ENCODE measurements at regions of chr20 and their contacts with region 1.

Region 1: DNA sequence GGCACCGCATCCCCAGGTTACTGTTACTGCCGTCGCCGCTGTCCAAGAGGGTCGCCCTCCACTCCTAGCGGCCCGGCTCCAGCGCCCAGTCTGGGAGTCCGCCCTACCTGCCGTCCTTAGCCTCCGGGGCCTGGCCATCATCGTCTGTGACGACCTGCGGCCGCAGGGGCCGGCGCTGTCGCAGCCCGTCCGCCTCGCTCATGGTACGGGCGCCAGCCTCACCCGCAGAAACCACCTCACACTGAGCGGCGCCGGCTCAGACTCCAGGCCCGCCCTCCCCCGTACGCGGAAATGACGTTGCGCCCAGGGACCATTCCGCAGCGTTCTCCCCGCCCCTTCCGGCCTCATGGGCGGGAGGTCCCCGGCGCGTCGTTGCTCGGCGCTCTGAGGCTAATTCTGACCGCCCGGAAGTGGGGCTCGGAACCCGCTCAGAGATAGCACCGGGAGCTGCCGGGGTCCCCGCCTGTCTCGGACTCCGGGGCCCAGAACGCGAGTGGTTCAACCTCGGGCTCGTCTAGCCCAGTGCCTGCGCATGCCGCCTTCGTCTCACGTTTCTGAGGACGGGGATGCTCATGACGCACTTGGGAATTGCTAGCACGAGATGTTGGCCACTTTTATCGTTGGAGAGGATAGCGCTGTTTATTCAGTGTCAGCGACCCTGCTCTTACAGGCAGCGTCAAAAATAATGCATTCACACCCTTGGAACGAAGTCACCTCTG is at the start of gene APMAP:
- DNase-seq: peak; percentile 97
- H3K4me3 ChIP-seq: peak within 1 kb of the TSS; percentile 71 to 96 (median 87)
- H3K27ac ChIP-seq: peak within 1 kb of the TSS; percentile 92 to 96 (median 94)
- H3K4me1 ChIP-seq: peaks cover 15 to 42% (median 20%) of the 10 kb centered on the region in 4 donors
- H3K27me3 ChIP-seq: no peaks in the 10 kb centered on the region
- CTCF ChIP-seq: no peak
- EP300 ChIP-seq: no peak
- POLR2A ChIP-seq: peak; percentile 98
- total RNA-seq, gene APMAP: 14.9 to 88.6 (median 50.2) TPM

Region 2: GRCh38 chr20:25032478-25033280 is 40.0 kb after region 1 on chr20:
- in situ Hi-C with region 1: no loop called
- intact Hi-C with region 1: no loop called
- DNase-seq: peak; percentile 52
- H3K4me3 ChIP-seq: no peak overlapping the region
- H3K27ac ChIP-seq: peak overlapping the region; percentile 70 to 79 (median 76)
- H3K4me1 ChIP-seq: peaks cover 35 to 52% (median 46%) of the 10 kb centered on the region in 4 donors
- H3K27me3 ChIP-seq: no peaks in the 10 kb centered on the region
- CTCF ChIP-seq: no peak
- EP300 ChIP-seq: no peak
- POLR2A ChIP-seq: no peak

Region 3: GRCh38 chr20:25057234-25058050 is 64.8 kb after region 1 on chr20:
- in situ Hi-C with region 1: loop called in 2 of 4 experiments (anchors 5 to 10 kb)
- intact Hi-C with region 1: no loop called
- DNase-seq: peak; percentile 85
- H3K4me3 ChIP-seq: peak overlapping the region; percentile 39 to 85 (median 80)
- H3K27ac ChIP-seq: peak overlapping the region; percentile 92 to 98 (median 96)
- H3K4me1 ChIP-seq: peaks cover 23 to 61% (median 48%) of the 10 kb centered on the region in 4 donors
- H3K27me3 ChIP-seq: no peaks in the 10 kb centered on the region
- CTCF ChIP-seq: peak in 4 of 5 experiments; percentile 2 to 48 (median 12)
- EP300 ChIP-seq: no peak
- POLR2A ChIP-seq: peak; percentile 82

Region 4: DNA sequence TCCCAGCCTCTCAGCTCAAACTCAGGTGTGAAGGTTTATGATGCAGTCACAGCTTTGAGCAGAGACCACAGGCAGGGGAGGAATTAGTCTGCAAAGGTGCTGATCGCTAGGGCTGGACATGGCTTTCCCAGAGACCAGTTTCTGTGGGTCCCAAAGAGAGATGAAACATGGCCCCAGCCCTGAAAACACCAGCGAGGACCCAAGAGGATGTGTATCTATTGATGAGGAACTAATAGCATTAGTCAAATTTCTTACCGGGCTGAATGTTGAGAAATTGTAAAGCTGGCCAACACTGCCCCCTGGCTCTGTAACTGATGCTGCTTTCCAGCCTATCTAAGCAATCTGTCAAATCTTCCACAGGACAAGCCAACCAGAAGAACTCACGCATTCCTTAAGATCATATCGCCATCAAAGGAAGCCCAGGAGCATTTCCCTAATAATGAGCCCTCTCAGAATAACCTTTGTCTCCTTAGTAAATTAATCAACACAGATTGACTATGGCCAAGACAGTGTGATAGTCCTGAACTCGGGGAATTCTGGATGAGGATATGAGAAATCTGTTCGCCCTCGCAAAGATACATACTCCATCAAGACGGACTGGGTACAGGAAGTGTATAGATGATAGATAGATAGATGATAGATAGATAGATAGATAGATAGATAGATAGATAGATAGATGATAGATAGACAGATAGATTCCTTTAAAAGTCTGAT is 73.1 kb after region 1 on chr20:
- in situ Hi-C with region 1: loop called (anchors 5 to 10 kb)
- intact Hi-C with region 1: loop called (anchors 2 kb)
- DNase-seq: peak; percentile 72
- H3K4me3 ChIP-seq: no peak overlapping the region
- H3K27ac ChIP-seq: no peak overlapping the region
- H3K4me1 ChIP-seq: peaks cover 0 to 8% (median 3%) of the 10 kb centered on the region in 4 donors
- H3K27me3 ChIP-seq: peaks cover 17% of the 10 kb centered on the region
- CTCF ChIP-seq: peak; percentile 74 to 89 (median 77)
- EP300 ChIP-seq: no peak
- POLR2A ChIP-seq: no peak

Region 5: DNA sequence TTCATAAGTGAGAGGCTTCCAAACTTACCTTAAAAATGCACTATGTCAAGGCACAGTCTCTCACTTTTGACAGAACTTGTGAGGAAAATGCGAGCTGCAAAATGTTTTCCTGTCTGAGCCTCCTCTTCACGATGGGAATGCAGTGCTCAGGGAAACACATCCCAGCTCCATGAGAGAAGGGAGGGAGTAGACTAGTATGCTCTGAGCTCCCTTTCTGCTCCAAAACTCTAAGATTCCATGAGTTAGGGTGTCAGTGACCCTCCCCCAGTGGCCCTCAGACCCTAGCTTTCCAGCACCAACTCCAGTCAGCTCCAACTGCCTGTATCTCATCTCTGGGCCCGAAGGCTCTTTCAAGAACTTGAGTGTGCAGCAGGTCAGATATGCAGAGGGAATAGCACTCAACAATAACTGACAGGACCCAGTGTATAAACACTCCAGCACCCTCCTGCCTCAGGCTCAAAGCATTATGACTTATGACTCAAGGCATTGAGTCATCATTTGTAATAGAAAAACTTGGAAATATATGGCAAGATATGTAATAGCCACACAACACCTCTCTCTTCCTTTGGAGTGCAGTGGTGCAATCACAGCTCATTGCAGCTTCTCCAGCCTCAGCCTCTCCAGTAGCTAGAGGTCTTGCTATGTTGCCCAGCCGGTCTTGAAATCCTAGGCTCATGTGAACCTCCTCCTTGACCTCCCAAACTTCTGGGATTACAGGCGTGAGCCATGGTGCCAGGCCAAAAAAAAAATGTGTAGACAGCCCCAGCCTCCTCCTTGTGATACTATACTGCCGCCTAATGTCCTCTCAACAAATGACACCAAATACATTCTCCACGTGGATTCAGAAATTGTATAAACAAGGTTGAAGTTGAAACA is 186.2 kb after region 1 on chr20:
- in situ Hi-C with region 1: loop called in 2 of 4 experiments (anchors 10 to 25 kb)
- intact Hi-C with region 1: loop called (anchors 5 kb)
- DNase-seq: no peak
- H3K4me3 ChIP-seq: no peak overlapping the region
- H3K27ac ChIP-seq: peak overlapping the region in 2 of 4 donors; percentile 22 to 72
- H3K4me1 ChIP-seq: peaks cover 0 to 9% (median 0%) of the 10 kb centered on the region in 4 donors
- H3K27me3 ChIP-seq: no peaks in the 10 kb centered on the region
- CTCF ChIP-seq: peak; percentile 66 to 80 (median 70)
- EP300 ChIP-seq: no peak
- POLR2A ChIP-seq: no peak

Region 6: DNA sequence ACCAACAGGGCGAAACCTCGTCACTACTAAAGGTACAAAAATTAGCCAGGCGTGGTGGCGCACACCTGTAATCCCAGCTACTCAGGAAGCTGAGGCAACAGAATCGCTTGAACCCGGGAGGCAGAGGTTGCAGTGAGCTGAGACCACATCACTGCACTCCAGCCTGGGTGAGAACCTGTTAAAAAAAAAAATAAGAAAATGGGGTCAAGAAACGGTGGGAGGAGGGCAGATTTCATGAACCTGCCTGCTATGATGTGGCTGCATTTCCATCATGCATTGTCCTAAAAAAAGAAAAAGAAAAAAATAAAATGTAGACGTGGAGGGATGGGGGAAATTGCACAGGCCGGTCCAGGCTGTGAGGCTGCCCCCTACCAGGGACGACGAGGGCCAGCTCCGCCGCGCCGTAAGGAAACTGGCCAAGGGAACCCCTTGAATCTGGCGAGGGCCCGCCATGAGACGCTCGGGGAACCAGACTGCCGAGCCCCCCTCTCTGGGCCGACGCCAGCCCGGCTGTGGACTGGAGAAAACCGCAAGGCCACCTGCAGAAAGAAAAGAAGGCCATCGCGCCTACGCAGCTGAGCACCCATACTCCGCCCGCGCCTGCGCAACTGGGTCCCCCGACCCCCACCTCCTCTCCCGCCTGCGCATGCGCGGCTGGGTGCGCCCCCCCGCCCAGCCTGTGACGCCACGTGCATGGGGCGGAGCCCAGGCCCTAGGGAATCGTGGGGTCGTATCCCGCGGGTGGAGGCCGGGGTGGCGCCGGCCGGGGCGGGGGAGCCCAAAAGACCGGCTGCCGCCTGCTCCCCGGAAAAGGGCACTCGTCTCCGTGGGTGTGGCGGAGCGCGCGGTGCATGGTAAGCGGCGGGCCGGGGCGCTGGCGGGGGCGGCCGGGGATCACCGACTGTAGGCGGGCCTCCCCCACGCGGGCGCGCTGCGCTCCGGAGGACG is 202.6 kb after region 1 on chr20 and contains the start of gene ENTPD6:
- in situ Hi-C with region 1: loop called in 2 of 4 experiments (anchors 10 to 25 kb)
- intact Hi-C with region 1: no loop called
- DNase-seq: peak; percentile 96
- H3K4me3 ChIP-seq: peak within 1 kb of the TSS; percentile 64 to 98 (median 80)
- H3K27ac ChIP-seq: peak within 1 kb of the TSS; percentile 84 to 94 (median 91)
- H3K4me1 ChIP-seq: peaks cover 22 to 44% (median 34%) of the 10 kb centered on the region in 4 donors
- H3K27me3 ChIP-seq: no peaks in the 10 kb centered on the region
- CTCF ChIP-seq: peak in 4 of 5 experiments; percentile 4 to 28 (median 10)
- EP300 ChIP-seq: no peak
- POLR2A ChIP-seq: peak; percentile 76
- total RNA-seq, gene ENTPD6: 163 to 261 (median 224) TPM

Region 7: DNA sequence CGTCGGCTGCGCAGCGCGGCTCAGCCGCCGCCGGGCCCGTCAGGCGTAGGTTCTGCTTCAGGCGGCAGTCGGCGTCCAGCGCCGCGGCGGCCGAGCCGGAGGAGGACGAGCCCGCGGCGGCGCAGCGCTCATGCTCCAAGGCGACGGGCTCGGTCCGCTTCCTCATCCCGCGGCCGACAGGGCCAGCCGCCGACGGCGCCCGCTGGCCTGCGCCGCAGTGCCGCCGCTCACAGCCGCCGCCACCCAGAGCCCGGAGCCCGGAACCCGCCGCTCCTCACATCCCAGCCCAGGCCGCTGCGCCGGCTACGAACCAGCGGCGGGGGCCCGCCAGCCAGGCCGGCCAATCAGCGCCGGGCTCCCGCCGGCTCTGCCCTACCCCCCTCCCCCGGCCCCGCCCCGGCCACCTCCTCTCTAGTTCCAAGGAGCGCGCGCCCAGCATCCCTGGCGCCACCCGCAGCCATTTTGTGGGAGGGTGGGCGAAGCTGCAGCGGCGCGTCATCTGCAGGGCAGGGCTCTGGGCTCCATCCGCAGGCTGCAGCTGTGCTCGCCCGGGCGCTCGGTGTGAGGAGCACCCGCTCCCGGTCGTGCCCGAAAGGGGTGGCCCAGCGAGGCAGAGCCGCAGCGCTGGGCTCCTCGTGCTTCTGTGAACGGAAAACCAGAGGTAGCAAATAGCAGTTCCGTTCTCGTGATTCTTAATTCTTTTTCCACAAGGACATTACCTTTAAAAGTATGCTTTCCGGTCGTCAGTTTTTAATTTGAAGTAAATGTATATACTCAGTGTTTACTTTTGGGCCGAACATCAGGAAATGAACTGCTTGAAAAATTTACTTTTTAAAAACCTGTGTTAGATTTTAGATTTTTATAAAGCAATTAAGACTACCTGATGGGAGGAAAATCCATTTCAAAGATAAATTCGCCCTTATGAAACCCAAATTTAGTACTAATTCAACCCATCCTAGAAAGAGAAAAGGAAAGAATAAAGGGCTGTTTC is 398.2 kb after region 1 on chr20 and contains the start of gene ABHD12:
- in situ Hi-C with region 1: loop called in 1 of 4 experiments (anchors 10 kb)
- intact Hi-C with region 1: no loop called
- DNase-seq: peak; percentile 98
- H3K4me3 ChIP-seq: peak within 1 kb of the TSS; percentile 71 to 94 (median 74)
- H3K27ac ChIP-seq: peak within 1 kb of the TSS; percentile 94 to 98 (median 94)
- H3K4me1 ChIP-seq: peaks cover 3 to 15% (median 11%) of the 10 kb centered on the region in 4 donors
- H3K27me3 ChIP-seq: no peaks in the 10 kb centered on the region
- CTCF ChIP-seq: no peak
- EP300 ChIP-seq: no peak
- POLR2A ChIP-seq: peak; percentile 91
- total RNA-seq, gene ABHD12: 67.3 to 103 (median 73.4) TPM

Region 8: DNA sequence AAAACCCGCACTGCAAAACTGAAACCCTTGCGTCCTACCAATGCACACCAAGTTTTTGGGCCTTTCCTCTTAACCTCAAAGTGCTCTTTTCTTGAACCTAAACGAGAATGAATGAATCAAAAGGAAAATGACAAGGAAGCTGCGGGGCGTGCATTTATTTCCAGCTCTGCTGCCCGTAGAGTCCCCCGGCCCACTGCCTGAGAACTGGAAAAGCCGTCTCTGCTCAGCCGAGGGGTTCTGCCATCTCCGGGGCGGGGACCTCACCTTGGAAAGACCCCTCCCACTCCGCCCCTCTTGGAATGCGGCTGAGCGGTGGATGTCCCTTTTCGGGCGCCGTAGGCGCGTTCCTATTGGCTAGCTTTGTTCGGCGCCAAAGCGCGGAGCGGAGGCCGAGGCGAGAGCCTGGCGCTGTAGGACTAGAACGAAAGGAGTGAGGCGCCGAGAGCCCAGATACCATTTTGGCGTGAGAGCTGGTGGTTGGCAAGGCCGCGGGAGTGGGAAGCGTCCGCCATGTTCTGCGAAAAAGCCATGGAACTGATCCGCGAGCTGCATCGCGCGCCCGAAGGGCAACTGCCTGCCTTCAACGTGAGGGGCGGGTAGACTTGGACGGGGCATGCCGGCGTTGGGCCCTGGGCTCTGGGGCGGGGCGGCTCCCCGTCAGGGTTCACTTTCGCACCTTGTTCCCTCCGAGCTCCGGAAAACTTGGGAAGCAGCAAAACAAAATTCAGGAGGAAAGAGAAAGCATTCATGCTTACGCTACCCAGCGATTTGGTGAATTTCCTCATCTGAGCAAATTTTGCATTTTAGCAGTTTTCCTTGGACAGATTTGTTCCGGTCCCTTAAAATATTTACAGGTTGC is 414.9 kb after region 1 on chr20 and contains the start of gene GINS1:
- in situ Hi-C with region 1: loop called in 1 of 4 experiments (anchors 25 kb)
- intact Hi-C with region 1: loop called (anchors 10 kb)
- DNase-seq: peak; percentile 85
- H3K4me3 ChIP-seq: peak within 1 kb of the TSS; percentile 51 to 69 (median 56)
- H3K27ac ChIP-seq: peak within 1 kb of the TSS; percentile 70 to 80 (median 73)
- H3K4me1 ChIP-seq: peaks cover 0 to 15% (median 7%) of the 10 kb centered on the region in 4 donors
- H3K27me3 ChIP-seq: no peaks in the 10 kb centered on the region
- CTCF ChIP-seq: no peak
- EP300 ChIP-seq: no peak
- POLR2A ChIP-seq: peak; percentile 42
- total RNA-seq, gene GINS1: 1.3 to 1.4 TPM in 2 of 4 donors, not detected in the others